PC-3 (cell line): ENCODE measurements at regions of chr16 and their contacts with region 1.

Region 1: DNA sequence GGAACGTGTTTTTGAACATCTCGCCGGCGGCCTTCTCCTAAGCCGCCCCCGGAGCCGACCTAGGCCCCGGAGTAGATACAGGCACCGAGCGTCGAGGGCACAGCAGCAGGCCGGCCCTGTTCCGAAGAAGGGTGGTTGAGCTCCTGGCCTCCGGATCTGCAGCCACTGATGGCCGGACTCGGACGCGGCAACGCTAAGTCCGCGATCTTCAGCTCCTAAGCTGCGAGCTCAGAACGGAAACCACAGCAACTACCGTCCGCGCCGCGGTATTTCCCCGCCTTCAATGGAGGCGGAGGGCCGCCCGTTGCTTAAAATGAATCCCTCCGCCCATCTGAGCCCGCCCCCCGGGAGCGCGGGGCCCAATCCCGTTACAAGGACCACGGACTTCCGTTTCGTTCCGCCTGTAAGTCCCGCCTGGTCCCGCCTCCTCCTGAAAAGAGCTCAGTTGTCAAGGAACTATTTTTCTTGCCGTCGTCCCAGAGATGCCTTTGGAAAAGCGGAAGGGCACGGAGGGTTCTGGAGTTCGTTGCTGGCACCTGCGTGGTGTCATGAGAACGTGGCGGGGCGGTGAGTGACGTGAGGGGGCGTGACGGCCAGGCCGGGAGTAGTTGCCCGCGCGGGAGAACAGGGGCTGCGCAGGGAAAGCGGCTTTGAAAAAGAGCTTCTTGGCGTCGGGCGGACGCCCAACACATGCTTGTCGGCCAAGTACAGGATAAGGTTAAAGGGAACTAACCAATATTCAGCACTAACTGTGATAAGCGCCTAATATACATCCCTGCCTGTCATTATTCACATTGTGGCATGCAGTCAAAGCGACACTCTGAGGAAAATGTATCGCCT is at the start of gene CFAP20:
- DNase-seq: peak; percentile 97
- ATAC-seq: peak; percentile 82
- H3K4me3 ChIP-seq: peak within 1 kb of the TSS; percentile 96
- H3K27ac ChIP-seq: peak within 1 kb of the TSS; percentile 62
- H3K4me1 ChIP-seq: peaks cover 26% of the 10 kb centered on the region
- H3K27me3 ChIP-seq: no peaks in the 10 kb centered on the region
- CTCF ChIP-seq: no peak
- total RNA-seq, gene CFAP20: 43.3 and 58.3 TPM in 2 replicates

Region 2: GRCh38 chr16:57916735-57917451 is 212.4 kb before region 1 on chr16:
- CTCF ChIA-PET with region 1: no interaction called
- POLR2A ChIA-PET with region 1: no interaction called
- intact Hi-C with region 1: no loop called
- DNase-seq: peak; percentile 53
- ATAC-seq: peak; percentile 22; the same call in 1 of the 2 replicates
- H3K4me3 ChIP-seq: no peak overlapping the region
- H3K27ac ChIP-seq: no peak overlapping the region
- H3K4me1 ChIP-seq: no peaks in the 10 kb centered on the region; the same call in 1 of the 2 replicates
- H3K27me3 ChIP-seq: no peaks in the 10 kb centered on the region
- CTCF ChIP-seq: no peak

Region 3: DNA sequence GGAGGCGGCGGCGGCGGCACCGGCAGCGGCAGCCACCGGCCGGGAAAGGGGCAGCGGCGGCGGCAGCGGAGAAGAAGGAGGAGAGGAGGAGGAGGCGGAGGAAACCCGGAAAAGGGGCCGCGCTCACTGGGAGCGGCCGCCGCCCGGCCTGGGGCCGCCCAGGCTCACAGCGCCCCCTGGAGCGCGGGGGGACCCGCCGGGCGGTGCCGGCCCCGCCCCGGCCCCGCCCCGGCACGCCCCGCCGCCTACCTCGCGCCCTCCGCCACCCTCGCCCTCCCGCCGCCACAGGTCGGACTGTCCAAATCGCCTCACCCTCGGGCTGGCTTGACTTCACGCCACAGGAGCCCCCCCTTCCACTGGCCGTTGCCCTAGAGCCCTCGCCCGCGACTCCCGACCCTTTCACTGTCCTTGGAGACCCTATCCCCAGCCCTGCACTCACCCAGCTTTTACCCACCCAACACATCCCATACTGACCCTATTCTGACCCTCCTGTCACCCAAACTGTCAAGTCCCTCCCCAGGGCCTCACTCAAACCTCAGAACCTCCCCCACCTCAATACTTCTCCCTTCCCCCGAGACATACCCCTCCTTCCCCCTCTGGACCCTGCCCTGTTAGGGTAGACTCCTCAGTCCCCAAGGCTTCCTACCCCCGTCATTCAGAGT is 68.8 kb after region 1 on chr16 and contains the start of gene CSNK2A2:
- CTCF ChIA-PET with region 1: no interaction called
- POLR2A ChIA-PET with region 1: no interaction called
- intact Hi-C with region 1: loop called (anchors 5 kb)
- DNase-seq: peak; percentile 61
- ATAC-seq: peak; percentile 94
- H3K4me3 ChIP-seq: peak within 1 kb of the TSS; percentile 96
- H3K27ac ChIP-seq: no peak within 1 kb of the TSS
- H3K4me1 ChIP-seq: peaks cover 5% of the 10 kb centered on the region
- H3K27me3 ChIP-seq: no peaks in the 10 kb centered on the region
- CTCF ChIP-seq: no peak
- total RNA-seq, gene CSNK2A2: 14.2 and 17.7 TPM in 2 replicates

Region 4: DNA sequence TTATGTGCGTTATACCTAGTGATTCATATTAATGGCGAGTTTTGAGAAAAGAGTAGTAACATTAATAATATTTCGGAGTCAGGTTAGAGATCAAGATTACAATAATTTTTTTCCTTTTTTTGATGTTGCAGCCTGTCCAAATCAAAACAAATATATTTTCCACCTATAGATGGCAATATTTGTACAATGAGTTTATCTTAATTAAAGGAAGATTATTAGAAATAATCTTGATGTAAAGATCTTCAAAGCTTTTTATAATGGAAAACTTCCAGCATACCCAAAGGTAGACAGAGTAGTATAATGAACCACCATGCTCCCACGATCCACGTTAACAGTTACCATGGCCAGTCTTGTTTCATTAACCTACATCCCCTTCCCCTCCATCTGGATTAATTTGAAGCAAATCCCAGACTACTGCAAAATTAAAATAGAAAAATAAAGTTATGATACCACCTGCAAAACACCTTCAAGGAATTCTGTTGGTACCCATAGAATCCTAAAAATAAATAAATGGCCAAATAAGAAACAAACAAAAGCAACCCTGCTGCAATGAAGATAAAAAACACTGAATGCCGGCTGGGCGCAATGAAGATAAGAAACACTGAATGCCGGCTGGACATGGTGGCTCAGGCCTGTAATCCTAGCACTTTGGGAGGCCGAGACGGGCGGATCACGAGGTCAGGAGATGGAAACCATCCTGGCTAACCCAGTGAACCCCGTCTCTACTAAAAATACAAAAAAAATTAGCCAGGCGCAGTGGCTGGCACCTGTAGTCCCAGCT is 216.4 kb after region 1 on chr16:
- CTCF ChIA-PET with region 1: no interaction called
- POLR2A ChIA-PET with region 1: no interaction called
- intact Hi-C with region 1: no loop called
- DNase-seq: peak; percentile 37
- ATAC-seq: no peak
- H3K4me3 ChIP-seq: no peak overlapping the region
- H3K27ac ChIP-seq: no peak overlapping the region
- H3K4me1 ChIP-seq: no peaks in the 10 kb centered on the region
- H3K27me3 ChIP-seq: no peaks in the 10 kb centered on the region
- CTCF ChIP-seq: peak; percentile 62